ENCODE measurements at regions of chr6 and their contacts with region 1.

Region 1: DNA sequence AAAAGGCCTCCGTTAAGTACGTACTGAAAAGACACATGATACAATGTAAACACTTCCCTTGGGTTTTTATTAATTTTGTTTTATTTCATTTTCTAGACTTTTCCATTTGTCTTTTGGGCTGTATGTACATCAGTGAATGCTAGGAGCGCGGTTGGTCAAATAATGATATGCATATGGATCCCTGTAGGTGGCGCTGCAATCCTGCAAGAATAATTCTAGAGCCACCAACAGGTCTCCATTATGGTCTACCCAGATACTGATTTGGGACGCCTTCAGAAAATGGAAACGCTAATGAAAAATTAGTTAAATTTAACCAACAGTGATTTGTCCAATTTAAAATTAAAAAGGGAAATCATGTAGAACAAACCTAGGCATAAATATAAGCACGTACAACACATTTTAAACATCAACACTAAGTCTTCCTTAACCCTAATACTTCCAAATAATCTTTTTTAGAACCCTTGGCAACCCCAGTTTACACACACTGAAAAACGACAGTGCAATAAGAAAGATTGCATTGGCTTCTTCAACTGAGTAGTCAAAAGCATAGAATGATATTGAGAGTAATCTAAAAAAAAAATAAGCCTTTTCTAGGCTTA is 433.5 kb downstream of the RFPL4B start:
- DNase-seq: peak; percentile 88
- H3K4me3 Mint-ChIP-seq: no peak overlapping the region
- H3K27ac Mint-ChIP-seq: no peak overlapping the region
- H3K4me1 Mint-ChIP-seq: no peaks in the 10 kb centered on the region
- H3K27me3 Mint-ChIP-seq: no peaks in the 10 kb centered on the region
- CTCF ChIP-seq: peak; percentile 87

Region 2: DNA sequence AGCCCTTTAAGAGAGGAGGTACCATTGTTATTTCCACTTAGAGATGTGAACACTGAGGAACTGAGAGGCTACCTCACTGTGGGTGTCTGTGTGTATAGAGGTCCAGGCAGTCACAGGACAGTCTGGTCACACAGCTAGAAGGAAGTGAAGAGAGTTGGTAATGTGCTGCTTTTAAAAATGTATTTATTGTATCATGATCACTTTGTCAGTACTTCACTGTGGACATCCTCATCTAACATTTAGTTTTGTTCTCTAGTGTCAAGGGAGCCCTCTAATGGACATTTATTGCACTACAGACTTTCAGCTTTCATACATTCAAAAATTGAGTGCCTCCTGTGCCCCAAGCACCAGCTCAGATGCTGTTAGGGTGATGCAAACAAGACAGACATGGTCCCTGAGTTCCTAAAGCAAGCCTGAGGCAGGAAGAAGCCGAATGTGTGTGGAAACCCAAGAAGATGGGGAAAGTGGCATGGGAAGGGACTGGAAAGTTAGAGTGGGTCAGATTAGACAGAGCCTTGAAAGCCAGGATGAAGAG is 1570.3 kb before region 1 on chr6:
- CTCF ChIA-PET with region 1: no interaction called
- POLR2A ChIA-PET with region 1: no interaction called
- intact Hi-C with region 1: no loop called
- DNase-seq: peak; percentile 69
- H3K4me3 Mint-ChIP-seq: no peak overlapping the region
- H3K27ac Mint-ChIP-seq: no peak overlapping the region
- H3K4me1 Mint-ChIP-seq: no peaks in the 10 kb centered on the region
- H3K27me3 Mint-ChIP-seq: no peaks in the 10 kb centered on the region
- CTCF ChIP-seq: peak; percentile 60

Region 3: DNA sequence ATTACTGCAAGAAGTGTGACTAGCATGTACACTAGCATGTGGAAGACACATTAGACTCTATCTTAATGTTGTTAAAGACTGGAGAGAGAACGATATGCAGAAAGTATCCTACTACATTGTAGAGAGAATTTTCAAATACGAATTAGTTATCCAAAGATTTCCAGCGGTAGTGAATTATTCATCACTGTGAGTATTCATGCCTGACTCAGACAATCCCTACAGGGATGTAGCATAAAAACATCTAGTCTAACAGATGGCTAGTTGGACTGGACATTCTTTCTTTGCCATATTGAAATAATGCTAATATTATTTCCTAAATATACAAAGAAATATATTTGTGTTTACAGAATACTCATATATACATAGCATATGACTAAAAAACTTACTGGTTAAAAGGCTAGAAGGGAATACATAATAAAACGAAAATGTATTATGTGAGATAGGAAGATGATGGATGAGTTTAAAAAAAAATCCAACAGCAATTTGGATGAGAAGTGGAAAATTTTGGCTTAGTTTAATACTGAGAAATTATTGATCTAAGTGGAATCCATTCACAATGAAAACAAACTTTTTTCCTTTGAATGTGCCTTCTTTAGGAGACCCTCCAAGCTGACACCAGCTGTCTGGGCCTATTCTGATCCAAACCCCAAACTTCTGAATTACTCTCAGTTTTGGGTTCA is 147.2 kb after region 1 on chr6:
- CTCF ChIA-PET with region 1: no interaction called
- POLR2A ChIA-PET with region 1: no interaction called
- intact Hi-C with region 1: no loop called
- DNase-seq: no peak
- H3K4me3 Mint-ChIP-seq: no peak overlapping the region
- H3K27ac Mint-ChIP-seq: no peak overlapping the region
- H3K4me1 Mint-ChIP-seq: peaks cover 4% of the 10 kb centered on the region
- H3K27me3 Mint-ChIP-seq: no peaks in the 10 kb centered on the region
- CTCF ChIP-seq: no peak

Region 4: DNA sequence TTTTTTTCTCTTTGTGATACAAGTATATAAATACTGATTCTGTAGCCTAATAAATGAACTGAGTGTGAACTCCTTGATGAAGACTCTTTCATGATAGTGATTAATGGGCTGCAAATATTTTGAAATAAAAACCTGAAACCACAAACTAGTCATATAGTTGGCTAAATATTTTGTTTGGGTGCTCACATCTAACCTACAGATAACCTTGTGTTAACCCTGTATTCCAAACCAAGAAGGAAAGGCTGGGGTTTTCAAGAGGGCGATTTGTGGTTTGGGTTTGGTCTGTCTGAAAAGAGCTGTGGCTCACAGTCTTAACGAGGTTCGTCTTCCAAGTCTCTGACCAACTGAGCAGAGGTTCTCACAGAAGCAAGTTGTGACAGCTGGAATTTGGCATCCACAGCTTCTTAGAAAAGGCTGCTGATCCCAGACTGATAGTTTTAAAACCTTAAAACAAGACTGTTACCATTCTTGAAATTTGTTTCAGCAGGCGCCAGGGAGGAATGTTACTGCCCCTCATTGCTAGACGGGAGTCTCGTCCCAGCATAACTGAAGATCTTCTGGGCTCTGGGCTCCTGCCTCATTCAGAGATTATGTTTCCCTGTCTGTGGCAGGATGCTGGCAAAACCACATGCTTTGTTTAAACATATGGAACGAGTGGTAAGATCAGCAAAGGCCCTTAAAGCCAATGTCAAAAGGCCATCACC is 340.1 kb after region 1 on chr6:
- CTCF ChIA-PET with region 1: no interaction called
- POLR2A ChIA-PET with region 1: no interaction called
- intact Hi-C with region 1: loop called (anchors 2 kb)
- DNase-seq: peak; percentile 89
- H3K4me3 Mint-ChIP-seq: peak overlapping the region; percentile 29
- H3K27ac Mint-ChIP-seq: no peak overlapping the region
- H3K4me1 Mint-ChIP-seq: peaks cover 18% of the 10 kb centered on the region
- H3K27me3 Mint-ChIP-seq: no peaks in the 10 kb centered on the region
- CTCF ChIP-seq: no peak

Region 5: GRCh38 chr6:113172531-113172966 is 392.0 kb after region 1 on chr6:
- CTCF ChIA-PET with region 1: no interaction called
- POLR2A ChIA-PET with region 1: no interaction called
- intact Hi-C with region 1: no loop called
- DNase-seq: no peak
- H3K4me3 Mint-ChIP-seq: no peak overlapping the region
- H3K27ac Mint-ChIP-seq: no peak overlapping the region
- H3K4me1 Mint-ChIP-seq: no peaks in the 10 kb centered on the region
- H3K27me3 Mint-ChIP-seq: no peaks in the 10 kb centered on the region
- CTCF ChIP-seq: no peak

Region 6: DNA sequence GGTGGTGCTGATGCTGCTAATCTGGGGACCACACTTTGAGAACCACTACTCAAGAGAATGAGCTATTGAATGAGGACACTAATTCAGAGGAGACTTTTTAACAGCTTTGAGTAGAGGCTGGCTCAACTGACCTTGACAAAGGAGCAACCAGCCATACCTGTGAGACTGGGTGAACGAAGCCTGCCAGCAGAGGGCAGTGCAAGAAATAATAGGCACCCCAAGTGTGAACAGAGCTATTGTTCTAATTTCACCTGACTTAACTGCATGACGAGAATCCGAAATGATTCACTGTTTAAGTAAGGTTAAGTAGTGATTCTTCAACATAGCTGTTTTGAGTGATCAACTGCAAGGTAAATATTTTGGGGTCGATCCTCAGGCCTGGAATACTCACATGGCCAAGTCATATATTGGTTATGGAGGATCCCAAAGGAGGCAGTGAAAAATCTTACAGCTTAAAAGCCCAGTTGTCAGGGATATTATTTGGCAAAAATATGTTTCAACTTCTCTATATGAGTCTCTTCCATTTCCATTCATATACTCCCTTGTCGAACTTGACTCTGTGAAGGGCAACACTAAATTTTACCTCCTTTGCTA is 526.1 kb after region 1 on chr6:
- CTCF ChIA-PET with region 1: interaction called, 4 read pairs
- POLR2A ChIA-PET with region 1: no interaction called
- intact Hi-C with region 1: loop called (anchors 1 kb)
- DNase-seq: peak; percentile 81
- H3K4me3 Mint-ChIP-seq: no peak overlapping the region
- H3K27ac Mint-ChIP-seq: no peak overlapping the region
- H3K4me1 Mint-ChIP-seq: no peaks in the 10 kb centered on the region
- H3K27me3 Mint-ChIP-seq: no peaks in the 10 kb centered on the region
- CTCF ChIP-seq: peak; percentile 78

Region 7: GRCh38 chr6:113488812-113489685 is 708.5 kb after region 1 on chr6:
- CTCF ChIA-PET with region 1: interaction called, 4 read pairs
- POLR2A ChIA-PET with region 1: no interaction called
- intact Hi-C with region 1: loop called (anchors 2 kb)
- DNase-seq: no peak
- H3K4me3 Mint-ChIP-seq: no peak overlapping the region
- H3K27ac Mint-ChIP-seq: no peak overlapping the region
- H3K4me1 Mint-ChIP-seq: no peaks in the 10 kb centered on the region
- H3K27me3 Mint-ChIP-seq: no peaks in the 10 kb centered on the region
- CTCF ChIP-seq: no peak

Region 8: DNA sequence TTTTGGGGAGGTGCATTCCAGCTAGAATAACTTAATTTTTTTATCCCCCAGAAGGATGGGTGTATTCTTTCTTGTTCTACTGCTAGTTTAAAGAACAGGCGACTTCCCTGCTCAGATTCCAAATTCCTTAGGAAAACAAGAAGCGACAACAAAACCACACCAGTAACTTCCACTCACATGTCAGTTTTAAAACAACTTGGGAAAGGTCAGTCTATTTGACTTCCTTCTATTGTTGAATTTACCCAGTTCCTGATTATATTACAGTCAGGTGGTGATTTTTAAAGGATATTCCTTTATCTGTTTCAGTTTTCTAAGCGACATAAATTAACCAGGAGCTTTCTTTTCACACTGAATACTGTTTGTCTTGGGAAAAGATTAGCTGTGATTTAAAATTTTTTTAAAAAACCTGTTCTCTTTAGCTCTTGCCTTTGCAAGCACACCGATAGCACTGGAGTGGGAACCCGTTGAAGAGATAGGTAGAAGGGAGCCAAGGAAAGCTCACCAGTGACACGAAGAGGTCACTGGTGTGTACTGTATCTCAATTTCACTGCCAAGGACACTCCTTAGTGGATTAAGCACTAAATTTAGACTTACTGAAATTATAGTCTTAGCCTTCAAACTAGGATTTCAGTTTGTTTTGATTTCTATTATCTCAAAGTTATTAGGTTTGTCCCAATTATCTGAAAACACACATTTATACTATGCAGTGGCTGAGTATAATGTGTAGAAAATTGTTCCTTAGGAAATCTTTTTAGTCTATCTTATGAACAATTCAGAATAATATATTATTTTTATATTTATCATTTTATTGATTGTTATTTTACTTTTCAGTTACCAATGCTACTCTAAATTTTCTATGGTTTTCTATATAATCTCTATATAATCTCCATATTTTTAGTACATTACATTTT is 1098.8 kb after region 1 on chr6:
- CTCF ChIA-PET with region 1: interaction called, 9 read pairs
- POLR2A ChIA-PET with region 1: no interaction called
- intact Hi-C with region 1: loop called (anchors 1 kb)
- DNase-seq: peak; percentile 80
- H3K4me3 Mint-ChIP-seq: no peak overlapping the region
- H3K27ac Mint-ChIP-seq: no peak overlapping the region
- H3K4me1 Mint-ChIP-seq: peaks cover 7% of the 10 kb centered on the region
- H3K27me3 Mint-ChIP-seq: no peaks in the 10 kb centered on the region
- CTCF ChIP-seq: peak; percentile 80

Measured in MCF 10A (cell line).